Common myeloid progenitor, CD34-positive (primary cell): ENCODE measurements at regions of chr12 and their contacts with region 1.

Region 1: GRCh38 chr12:109804820-109805761 is 28.1 kb downstream of the TRPV4 start:
- DNase-seq: peak; percentile 40 to 64 (median 51)
- H3K4me3 ChIP-seq: no peak overlapping the region
- H3K27ac ChIP-seq: no peak overlapping the region
- H3K4me1 ChIP-seq: no peaks in the 10 kb centered on the region
- H3K27me3 ChIP-seq: peaks cover 0 to 2% (median 0%) of the 10 kb centered on the region in 5 experiments

Region 2: DNA sequence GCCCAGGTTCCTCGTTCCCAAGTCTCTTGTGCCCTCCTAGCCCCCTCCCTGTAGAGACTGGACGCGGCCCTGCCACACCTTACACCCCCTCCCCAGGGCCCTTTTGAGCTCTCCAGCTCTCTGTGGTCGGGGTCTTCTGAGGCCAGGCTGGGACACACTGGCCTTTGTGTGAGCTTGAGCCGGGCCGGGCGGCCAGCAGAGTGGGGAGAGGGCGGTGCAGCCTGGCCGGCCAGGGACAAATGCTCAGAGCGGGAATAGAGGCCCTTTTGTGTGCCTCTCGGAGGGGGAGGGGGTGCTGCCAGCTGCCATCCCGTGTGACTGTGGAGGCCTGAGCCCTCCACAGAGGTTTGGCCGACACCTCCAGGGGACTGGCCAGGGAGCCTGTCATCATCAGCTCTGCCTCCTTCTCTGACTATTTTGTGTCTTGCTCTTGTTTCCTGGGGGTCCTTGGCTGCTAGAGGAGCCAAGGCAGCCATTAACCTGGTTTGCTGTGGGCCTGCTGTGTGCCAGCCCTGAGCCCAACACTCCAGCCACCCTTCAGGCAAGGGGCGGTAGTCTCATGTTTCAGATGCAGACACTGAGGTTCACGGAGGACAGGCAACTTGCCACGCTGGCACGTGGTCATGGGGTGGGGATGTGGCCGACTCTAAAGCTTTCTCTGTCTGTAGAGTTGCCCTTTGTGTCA is 77.9 kb before region 1 on chr12:
- CTCF ChIA-PET with region 1: no interaction called
- POLR2A ChIA-PET with region 1: no interaction called
- DNase-seq: no peak
- H3K4me3 ChIP-seq: no peak overlapping the region
- H3K27ac ChIP-seq: no peak overlapping the region
- H3K4me1 ChIP-seq: no peaks in the 10 kb centered on the region
- H3K27me3 ChIP-seq: peaks cover 0 to 2% (median 0%) of the 10 kb centered on the region in 5 experiments

Region 3: DNA sequence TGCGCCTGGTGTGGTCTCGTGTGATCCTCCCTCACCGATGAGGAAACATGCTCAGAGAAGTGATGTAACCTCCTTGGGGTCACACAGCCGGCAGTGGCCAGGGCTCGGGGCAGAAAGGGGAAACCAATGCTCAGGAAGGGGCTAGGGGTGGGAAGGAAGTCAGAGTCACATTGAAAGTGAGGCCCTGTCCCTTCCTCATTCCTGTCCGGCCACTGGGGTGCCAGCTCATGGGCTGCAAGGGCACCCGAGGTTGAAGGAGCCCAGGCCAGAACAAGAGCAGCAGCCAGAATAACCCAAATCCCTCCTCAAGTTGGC is 23.1 kb after region 1 on chr12:
- CTCF ChIA-PET with region 1: interaction called, 21 read pairs
- POLR2A ChIA-PET with region 1: no interaction called
- DNase-seq: peak in 2 of 3 donors; percentile 26 to 28
- H3K4me3 ChIP-seq: no peak overlapping the region
- H3K27ac ChIP-seq: no peak overlapping the region
- H3K4me1 ChIP-seq: peaks cover 0 to 11% (median 0%) of the 10 kb centered on the region in 4 experiments
- H3K27me3 ChIP-seq: peaks cover 0 to 28% (median 7%) of the 10 kb centered on the region in 5 experiments

Region 4: GRCh38 chr12:109833307-109834189 is 28.5 kb after region 1 on chr12 and contains the start of gene TRPV4:
- CTCF ChIA-PET with region 1: interaction called, 21 read pairs
- POLR2A ChIA-PET with region 1: interaction called, 4 read pairs
- DNase-seq: no peak
- H3K4me3 ChIP-seq: peak within 1 kb of the TSS in 1 of 7 experiments; percentile 40
- H3K27ac ChIP-seq: no peak within 1 kb of the TSS
- H3K4me1 ChIP-seq: peaks cover 0 to 5% (median 0%) of the 10 kb centered on the region in 4 experiments
- H3K27me3 ChIP-seq: peaks cover 2 to 49% (median 13%) of the 10 kb centered on the region in 5 experiments

Region 5: GRCh38 chr12:109879403-109880015 is 74.4 kb after region 1 on chr12:
- CTCF ChIA-PET with region 1: interaction called, 10 read pairs
- POLR2A ChIA-PET with region 1: no interaction called
- DNase-seq: peak in 1 of 3 donors; percentile 12
- H3K4me3 ChIP-seq: peak overlapping the region; percentile 64 to 95 (median 86)
- H3K27ac ChIP-seq: peak overlapping the region; percentile 61 to 83
- H3K4me1 ChIP-seq: peaks cover 8 to 21% (median 15%) of the 10 kb centered on the region in 4 experiments
- H3K27me3 ChIP-seq: no peaks in the 10 kb centered on the region